ENCODE measurements at regions of chr10 and their contacts with region 1.

Region 1: GRCh38 chr10:22251751-22252223 is 34.0 kb upstream of the EBLN1 start:
- DNase-seq: peak; percentile 65 to 88 (median 80)
- ATAC-seq: peak; percentile 71
- H3K4me3 ChIP-seq: peak overlapping the region; percentile 60 to 79
- H3K27ac ChIP-seq: peak overlapping the region; percentile 94 to 95
- H3K4me1 ChIP-seq: peaks cover 0 to 34% of the 10 kb centered on the region in 2 donors
- H3K27me3 ChIP-seq: peaks cover 5 to 27% of the 10 kb centered on the region in 2 donors
- CTCF ChIP-seq: no peak

Region 2: GRCh38 chr10:20674926-20675325 is 1576.9 kb before region 1 on chr10:
- intact Hi-C with region 1: no loop called
- DNase-seq: no peak
- ATAC-seq: no peak
- H3K4me3 ChIP-seq: no peak overlapping the region
- H3K27ac ChIP-seq: no peak overlapping the region
- H3K4me1 ChIP-seq: no peaks in the 10 kb centered on the region
- H3K27me3 ChIP-seq: no peaks in the 10 kb centered on the region
- CTCF ChIP-seq: no peak

Region 3: GRCh38 chr10:21364196-21365114 is 887.3 kb before region 1 on chr10:
- intact Hi-C with region 1: no loop called
- DNase-seq: peak in 1 of 4 donors; percentile 36
- ATAC-seq: peak; percentile 67
- H3K4me3 ChIP-seq: no peak overlapping the region
- H3K27ac ChIP-seq: peak overlapping the region; percentile 50 to 69
- H3K4me1 ChIP-seq: peaks cover 0 to 7% of the 10 kb centered on the region in 2 donors
- H3K27me3 ChIP-seq: no peaks in the 10 kb centered on the region
- CTCF ChIP-seq: no peak

Region 4: DNA sequence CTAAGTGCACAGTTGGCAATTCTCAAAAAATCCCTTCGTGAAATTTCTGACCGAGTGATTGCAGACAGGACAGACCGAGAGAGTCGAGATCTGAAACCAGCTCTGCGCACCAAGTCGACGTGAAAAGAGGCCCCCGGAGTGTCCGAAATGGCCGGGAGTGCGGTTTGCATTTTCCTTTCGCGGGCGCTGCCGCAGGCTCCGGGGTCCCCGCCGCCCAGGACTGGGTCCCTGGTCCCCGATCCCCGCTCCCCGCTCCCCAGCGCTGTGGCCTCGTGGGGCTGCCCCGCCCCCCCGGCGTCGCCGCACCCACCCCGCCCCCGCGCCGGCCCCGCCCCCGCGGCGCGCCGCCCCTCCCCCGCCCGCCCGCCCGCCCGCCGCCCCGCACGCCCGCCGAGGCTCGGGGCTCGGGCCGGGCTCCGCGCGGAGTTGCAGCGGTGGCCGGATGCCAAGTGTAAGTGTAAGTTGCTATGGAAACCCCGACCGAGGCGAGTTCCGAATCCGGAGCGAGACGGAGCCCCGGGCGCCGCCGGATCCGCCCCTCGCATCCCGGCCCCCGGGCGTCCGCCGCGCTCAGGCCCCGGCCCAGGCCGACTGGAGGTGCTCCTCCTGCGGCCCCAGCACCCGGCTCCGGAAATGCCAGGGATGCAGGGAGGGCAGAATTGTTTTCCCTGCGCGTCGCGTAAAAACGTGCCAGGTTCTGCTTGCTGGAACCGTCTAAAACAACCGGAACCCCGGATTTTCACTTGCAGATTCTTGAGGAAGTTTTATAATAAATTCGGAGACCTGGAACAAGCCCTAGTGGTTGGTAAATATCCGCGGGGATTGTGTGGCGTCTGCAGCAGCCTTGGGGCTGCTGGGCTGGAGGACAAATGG is 73.7 kb after region 1 on chr10:
- intact Hi-C with region 1: loop called in 1 of 2 experiments (anchors 10 kb)
- DNase-seq: peak; percentile 67 to 91 (median 79)
- ATAC-seq: peak; percentile 62
- H3K4me3 ChIP-seq: peak overlapping the region; percentile 47 to 60
- H3K27ac ChIP-seq: peak overlapping the region; percentile 45 to 63
- H3K4me1 ChIP-seq: peaks cover 13 to 36% of the 10 kb centered on the region in 2 donors
- H3K27me3 ChIP-seq: peaks cover 12 to 37% of the 10 kb centered on the region in 2 donors
- CTCF ChIP-seq: no peak